GM10248 (cell line): ENCODE measurements at regions of chr2 and their contacts with region 1.

Region 1: DNA sequence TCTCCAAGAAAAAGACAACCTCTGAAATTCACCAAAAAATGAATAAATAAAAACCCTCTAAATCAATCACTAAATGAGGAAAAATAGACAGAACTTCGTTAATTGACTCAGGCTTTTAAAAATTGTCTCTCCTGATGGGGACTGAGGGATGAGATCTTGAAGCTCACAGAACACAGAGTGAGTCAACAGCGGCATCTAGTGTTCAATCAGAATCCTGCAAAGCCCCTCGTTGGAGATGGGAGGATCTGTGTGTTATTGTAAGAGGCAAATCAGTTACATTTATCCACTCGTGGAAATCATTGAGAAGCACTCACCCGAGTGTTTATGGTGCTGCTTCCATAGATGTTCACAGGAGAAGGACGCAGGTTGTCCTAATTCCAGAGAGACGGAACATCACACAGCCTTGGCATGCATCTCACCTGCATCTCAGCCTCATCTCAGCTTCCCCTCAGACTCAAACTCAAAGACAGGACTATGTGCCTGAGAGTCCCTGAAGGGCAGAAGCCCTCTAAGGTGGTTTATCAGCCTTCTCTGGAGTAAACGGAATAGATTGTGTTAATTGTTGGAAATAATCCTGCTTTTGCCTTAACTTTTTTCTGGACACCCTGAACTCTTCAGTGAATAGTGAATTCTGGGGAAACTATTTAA is 82.0 kb downstream of the MREG start:
- DNase-seq: peak; percentile 58
- CTCF ChIP-seq: peak; percentile 88

Region 2: GRCh38 chr2:215466097-215466909 is 465.1 kb before region 1 on chr2:
- CTCF ChIA-PET with region 1: no interaction called
- POLR2A ChIA-PET with region 1: no interaction called
- DNase-seq: no peak
- CTCF ChIP-seq: no peak

Region 3: DNA sequence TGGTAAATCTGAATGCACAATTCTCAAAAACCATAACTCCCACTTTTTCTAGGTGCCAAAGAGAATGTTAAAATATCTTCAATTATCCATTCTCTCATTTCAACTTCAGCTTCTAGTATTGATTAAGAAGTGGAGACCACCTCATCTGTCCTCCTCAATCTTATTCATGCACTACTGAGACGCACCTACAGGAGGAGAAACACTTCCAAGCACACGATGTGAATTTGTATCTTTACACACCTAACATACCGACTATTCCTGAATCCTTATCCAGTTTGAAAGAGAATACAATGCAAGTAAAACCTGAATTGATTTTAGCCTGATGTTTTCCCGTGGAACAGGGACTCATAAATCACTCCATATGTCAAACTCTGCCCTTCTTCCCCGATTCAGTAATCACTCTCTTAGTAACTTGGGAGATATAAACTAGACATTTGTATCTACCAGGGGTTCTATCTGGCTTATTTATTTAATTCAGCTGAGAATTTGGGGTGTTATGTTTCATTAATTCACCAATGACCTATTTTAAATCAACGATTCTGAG is 19.0 kb before region 1 on chr2:
- CTCF ChIA-PET with region 1: interaction called, 52 read pairs
- POLR2A ChIA-PET with region 1: no interaction called
- DNase-seq: no peak
- CTCF ChIP-seq: no peak

Region 4: DNA sequence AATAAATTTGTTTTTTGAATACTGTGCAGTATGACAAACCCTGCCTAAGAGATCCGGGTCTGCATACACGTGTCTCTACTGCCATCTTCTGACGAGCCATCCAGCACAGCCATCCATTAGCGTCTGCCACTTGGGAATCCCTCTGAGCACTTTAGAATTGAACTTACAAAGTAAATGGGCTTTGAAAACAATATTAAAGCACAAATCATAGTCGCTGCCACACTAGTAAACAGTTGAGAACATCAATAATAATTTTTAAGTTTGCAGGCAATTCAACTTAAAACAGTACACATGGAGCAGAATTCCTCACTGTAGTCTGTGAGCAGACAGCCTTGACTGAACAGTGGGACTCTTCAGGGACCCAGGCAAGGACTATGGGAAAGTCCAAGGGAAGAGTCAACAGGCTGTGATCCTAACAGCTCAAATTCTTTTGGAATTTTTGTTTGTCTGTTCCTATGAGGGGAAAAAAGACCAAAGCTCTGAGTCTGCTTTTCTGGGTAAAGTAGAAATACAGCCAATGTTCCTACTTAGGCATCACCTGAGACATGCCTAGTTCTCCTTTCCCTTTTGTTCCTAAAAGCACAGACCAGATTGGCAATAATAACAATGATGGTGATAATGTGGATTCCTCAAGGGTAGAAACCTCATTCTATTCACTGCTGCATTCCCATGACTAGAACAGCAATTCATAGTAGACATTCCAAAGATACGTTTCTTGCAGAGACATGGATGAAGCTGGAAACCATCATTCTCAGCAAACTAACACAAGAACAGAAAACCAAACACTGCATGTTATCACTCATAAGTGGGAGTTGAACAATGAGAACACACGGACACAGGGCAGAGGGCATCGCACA is 10.9 kb before region 1 on chr2:
- CTCF ChIA-PET with region 1: interaction called, 52 read pairs
- POLR2A ChIA-PET with region 1: no interaction called
- DNase-seq: peak; percentile 60
- CTCF ChIP-seq: peak; percentile 75

Region 5: DNA sequence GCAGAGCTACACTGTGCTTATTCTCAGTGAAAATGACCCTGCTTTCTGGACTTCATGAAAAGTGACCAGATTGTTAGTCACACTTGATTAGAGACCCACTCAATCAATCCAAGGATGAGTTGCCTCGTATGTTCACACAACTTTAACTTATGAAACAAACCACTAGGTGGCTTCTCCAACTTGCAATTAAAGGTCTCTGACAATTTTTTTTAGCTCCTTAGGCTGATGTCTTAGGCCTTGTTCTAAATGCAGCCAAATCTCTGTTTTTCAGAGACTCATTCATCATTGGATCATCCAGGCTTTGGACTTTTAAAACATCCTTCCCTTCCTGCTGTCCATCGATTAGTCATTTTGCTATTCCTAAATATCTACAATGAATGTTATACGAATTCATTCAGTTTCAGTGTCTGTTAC is 18.6 kb after region 1 on chr2:
- CTCF ChIA-PET with region 1: interaction called, 16 read pairs
- POLR2A ChIA-PET with region 1: no interaction called
- DNase-seq: peak; percentile 41
- CTCF ChIP-seq: peak; percentile 38